ENCODE measurements at regions of chr20 and their contacts with region 1.

Region 1: DNA sequence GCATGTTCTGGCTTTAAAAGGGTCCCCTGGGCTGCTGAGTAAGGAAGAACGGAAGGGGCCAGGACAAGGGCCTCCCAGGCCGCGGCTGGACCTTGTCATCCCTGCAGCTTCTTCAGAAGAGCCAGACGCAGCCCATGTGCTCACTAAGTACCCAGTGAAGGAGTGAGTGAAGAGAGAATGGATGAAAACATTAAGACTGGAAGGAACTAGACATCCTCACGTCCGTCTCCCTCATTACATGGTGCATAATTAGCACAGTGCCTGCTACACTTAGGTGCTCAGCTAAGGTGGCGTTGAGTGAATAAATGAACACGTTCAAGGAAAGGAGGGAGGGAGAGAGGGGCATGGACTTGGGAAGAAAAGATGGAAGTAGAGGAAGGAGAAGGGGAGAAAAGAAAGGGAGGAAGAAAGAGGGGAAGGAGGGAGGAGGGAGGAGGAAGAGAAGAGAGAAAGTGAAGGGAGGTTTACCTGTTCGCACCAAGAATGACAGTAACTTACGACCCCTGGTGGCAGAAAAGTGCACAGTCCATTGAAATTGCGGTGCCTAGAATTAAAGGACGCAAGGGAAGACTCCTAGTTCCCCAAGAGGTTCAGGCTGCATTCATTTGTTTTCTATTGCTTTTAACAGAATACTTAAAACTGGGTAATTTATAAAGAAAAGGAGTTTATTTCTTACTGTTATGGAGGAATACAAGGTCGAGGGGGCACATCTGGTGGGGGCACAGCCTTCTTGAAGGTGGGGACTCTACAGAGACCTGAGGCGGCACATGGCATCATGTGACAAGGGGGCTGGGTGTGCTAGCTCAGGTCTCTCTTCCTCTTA is 8.0 kb downstream of the TP53RK start:
- DNase-seq: peak; percentile 27
- ATAC-seq: peak; percentile 80
- H3K4me3 ChIP-seq: no peak overlapping the region
- H3K27ac ChIP-seq: no peak overlapping the region
- H3K4me1 ChIP-seq: peaks cover 13% of the 10 kb centered on the region
- H3K27me3 ChIP-seq: no peaks in the 10 kb centered on the region
- CTCF ChIP-seq: peak; percentile 81 to 86 (median 83)
- EP300 ChIP-seq: no peak
- POLR2A ChIP-seq: no peak
- RAD21 ChIP-seq: peak; percentile 74

Region 2: GRCh38 chr20:46545077-46545826 is 136.0 kb before region 1 on chr20:
- CTCF ChIA-PET with region 1: interaction called, 12 read pairs
- POLR2A ChIA-PET with region 1: no interaction called
- RAD21 ChIA-PET with region 1: interaction called, 19 read pairs
- SMC1A ChIA-PET with region 1: interaction called, 12 read pairs
- in situ Hi-C with region 1: loop called (anchors 10 kb)
- intact Hi-C with region 1: loop called (anchors 5 kb)
- DNase-seq: no peak
- ATAC-seq: peak; percentile 77
- H3K4me3 ChIP-seq: no peak overlapping the region
- H3K27ac ChIP-seq: peak overlapping the region; percentile 53; the same call in 1 of the 2 replicates
- H3K4me1 ChIP-seq: peaks cover 32% of the 10 kb centered on the region
- H3K27me3 ChIP-seq: no peaks in the 10 kb centered on the region
- CTCF ChIP-seq: no peak
- EP300 ChIP-seq: no peak
- POLR2A ChIP-seq: no peak
- RAD21 ChIP-seq: no peak

Region 3: GRCh38 chr20:46739431-46740129 is 58.3 kb after region 1 on chr20:
- CTCF ChIA-PET with region 1: no interaction called
- POLR2A ChIA-PET with region 1: no interaction called
- RAD21 ChIA-PET with region 1: no interaction called
- SMC1A ChIA-PET with region 1: no interaction called
- in situ Hi-C with region 1: no loop called
- intact Hi-C with region 1: no loop called
- DNase-seq: no peak
- ATAC-seq: no peak
- H3K4me3 ChIP-seq: no peak overlapping the region
- H3K27ac ChIP-seq: no peak overlapping the region
- H3K4me1 ChIP-seq: no peaks in the 10 kb centered on the region
- H3K27me3 ChIP-seq: no peaks in the 10 kb centered on the region; a peak in 1 of 4 replicates
- CTCF ChIP-seq: no peak
- EP300 ChIP-seq: no peak
- POLR2A ChIP-seq: no peak
- RAD21 ChIP-seq: no peak